ENCODE measurements at regions of chr15 and their contacts with region 1.

Region 1: DNA sequence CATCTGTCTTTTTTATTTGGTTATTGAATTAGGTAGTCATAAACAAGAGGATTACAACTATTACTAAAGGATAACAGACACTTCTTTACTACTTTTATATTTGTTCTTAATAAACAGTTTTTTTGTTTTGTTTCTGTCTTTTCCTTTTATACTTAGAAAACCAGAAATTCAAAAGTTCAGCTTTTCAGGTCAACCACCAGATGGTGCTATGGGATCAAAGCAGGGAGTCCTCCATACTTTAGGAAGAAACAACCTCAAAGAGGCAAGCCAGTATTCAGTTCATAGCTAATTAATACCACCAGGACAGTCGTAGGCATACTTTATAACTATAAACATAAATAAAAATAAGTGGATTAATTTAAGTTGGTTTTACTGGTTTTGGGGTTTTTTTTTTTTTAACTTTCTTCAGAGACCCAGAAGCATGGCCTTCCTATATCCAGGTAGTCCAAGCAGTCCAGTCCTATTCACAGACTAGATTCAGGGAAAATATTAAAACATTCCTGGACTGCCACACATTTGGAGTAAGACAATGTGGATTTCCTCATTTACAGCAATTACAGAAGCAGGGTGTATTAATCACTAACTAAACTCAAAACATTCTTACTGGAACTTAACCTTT is 16.0 kb upstream of the EID1 start:
- ATAC-seq: peak; percentile 12 to 75 (median 52)
- H3K4me3 ChIP-seq: no peak overlapping the region
- H3K27ac ChIP-seq: no peak overlapping the region
- H3K4me1 ChIP-seq: peaks cover 9 to 14% of the 10 kb centered on the region in 2 donors

Region 2: GRCh38 chr15:48963524-48964113 is 101.7 kb after region 1 on chr15 and contains the start of gene SHC4:
- in situ Hi-C with region 1: loop called in 1 of 9 experiments (anchors 10 kb)
- ATAC-seq: peak; percentile 78 to 90 (median 88)
- H3K4me3 ChIP-seq: peak within 1 kb of the TSS; percentile 38 to 74 (median 45)
- H3K27ac ChIP-seq: peak within 1 kb of the TSS; percentile 35 to 76
- H3K4me1 ChIP-seq: peaks cover 14 to 28% of the 10 kb centered on the region in 2 donors
- total RNA-seq, gene SHC4: 0.70 to 11.3 (median 3.9) TPM in 7 of 8 experiments, not detected in the other

Region 3: DNA sequence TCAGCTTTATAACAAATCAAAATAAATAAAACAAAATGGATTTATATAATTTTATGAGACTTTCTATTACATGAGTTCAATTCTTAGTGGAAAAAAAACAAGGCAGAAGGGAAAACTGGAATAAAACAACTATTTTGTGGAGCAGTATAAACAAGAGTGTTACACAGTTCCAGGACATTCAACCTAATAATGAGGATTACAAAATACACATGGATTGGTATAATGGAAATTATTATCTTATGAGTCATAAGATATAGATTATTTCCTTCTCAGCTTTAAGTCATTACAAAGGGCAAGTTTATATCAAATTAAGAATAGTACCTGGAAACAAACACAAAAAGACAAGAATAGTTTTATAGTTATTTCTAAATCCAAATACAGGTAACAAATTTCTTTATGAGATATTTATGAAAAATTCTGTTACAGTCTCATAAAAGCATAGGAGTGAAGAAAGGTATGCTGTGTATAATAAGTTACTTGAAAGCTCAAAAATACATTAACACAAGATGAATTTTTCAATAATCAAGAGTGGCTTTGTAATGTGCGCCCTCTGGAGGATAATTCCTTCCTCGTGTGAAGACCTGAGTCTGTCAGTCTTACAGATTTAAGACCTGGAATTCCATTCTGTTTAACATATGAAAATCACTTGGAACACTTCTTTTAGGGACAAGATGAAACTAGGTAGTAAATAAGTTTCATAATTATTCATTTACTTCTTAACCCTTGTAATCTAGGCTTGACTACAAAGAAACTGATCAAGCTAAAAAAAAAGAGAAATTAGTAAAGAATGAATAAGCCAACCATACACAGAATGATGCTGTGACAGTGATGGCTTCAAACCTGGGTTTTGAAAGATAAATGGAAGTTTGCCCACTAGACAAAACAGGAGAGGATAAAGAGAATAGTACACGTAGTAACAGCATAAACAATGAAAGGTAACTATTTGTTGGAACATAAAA is 284.0 kb after region 1 on chr15:
- in situ Hi-C with region 1: loop called in 2 of 9 experiments (anchors 25 kb)
- ATAC-seq: peak in 5 of 8 experiments; percentile 32 to 71 (median 53)
- H3K4me3 ChIP-seq: no peak overlapping the region
- H3K27ac ChIP-seq: no peak overlapping the region
- H3K4me1 ChIP-seq: peaks cover 0 to 3% of the 10 kb centered on the region in 2 donors

Region 4: GRCh38 chr15:49155110-49155833 is 293.4 kb after region 1 on chr15 and contains the start of gene COPS2:
- in situ Hi-C with region 1: loop called in 1 of 9 experiments (anchors 25 kb)
- ATAC-seq: peak; percentile 91 to 97 (median 95)
- H3K4me3 ChIP-seq: peak within 1 kb of the TSS; percentile 72 to 84 (median 81)
- H3K27ac ChIP-seq: peak within 1 kb of the TSS; percentile 92 to 95
- H3K4me1 ChIP-seq: peaks cover 0 to 16% of the 10 kb centered on the region in 2 donors
- total RNA-seq, gene COPS2: 55.0 to 128 (median 86.1) TPM

Region 5: GRCh38 chr15:49185473-49185872 is 323.6 kb after region 1 on chr15:
- in situ Hi-C with region 1: no loop called
- ATAC-seq: no peak
- H3K4me3 ChIP-seq: no peak overlapping the region
- H3K27ac ChIP-seq: no peak overlapping the region
- H3K4me1 ChIP-seq: peaks cover 0 to 9% of the 10 kb centered on the region in 2 donors

Region 6: GRCh38 chr15:49215768-49216739 is 354.1 kb after region 1 on chr15:
- in situ Hi-C with region 1: loop called in 1 of 9 experiments (anchors 25 kb)
- ATAC-seq: peak in 3 of 8 experiments; percentile 40 to 55 (median 53)
- H3K4me3 ChIP-seq: no peak overlapping the region
- H3K27ac ChIP-seq: no peak overlapping the region
- H3K4me1 ChIP-seq: no peaks in the 10 kb centered on the region

Region 7: GRCh38 chr15:49421991-49422390 is 560.1 kb after region 1 on chr15:
- in situ Hi-C with region 1: loop called in 1 of 9 experiments (anchors 25 kb)
- ATAC-seq: peak; percentile 33 to 65 (median 58)
- H3K4me3 ChIP-seq: no peak overlapping the region
- H3K27ac ChIP-seq: no peak overlapping the region
- H3K4me1 ChIP-seq: peaks cover 0 to 6% of the 10 kb centered on the region in 2 donors

Region 8: GRCh38 chr15:50145451-50145872 is 1283.5 kb after region 1 on chr15:
- in situ Hi-C with region 1: loop called in 5 of 9 experiments (anchors 25 kb)
- ATAC-seq: peak; percentile 76 to 93 (median 85)
- H3K4me3 ChIP-seq: no peak overlapping the region
- H3K27ac ChIP-seq: no peak overlapping the region
- H3K4me1 ChIP-seq: no peaks in the 10 kb centered on the region